PC-3 (cell line): ENCODE measurements at regions of chr2 and their contacts with region 1.

Region 1: GRCh38 chr2:156892467-156893281 is 364.8 kb upstream of the GALNT5 start:
- DNase-seq: peak; percentile 83
- ATAC-seq: peak; percentile 88
- H3K4me3 ChIP-seq: peak overlapping the region; percentile 76
- H3K27ac ChIP-seq: peak overlapping the region; percentile 28
- H3K4me1 ChIP-seq: peaks cover 15% of the 10 kb centered on the region
- H3K27me3 ChIP-seq: no peaks in the 10 kb centered on the region
- CTCF ChIP-seq: peak; percentile 76

Region 2: DNA sequence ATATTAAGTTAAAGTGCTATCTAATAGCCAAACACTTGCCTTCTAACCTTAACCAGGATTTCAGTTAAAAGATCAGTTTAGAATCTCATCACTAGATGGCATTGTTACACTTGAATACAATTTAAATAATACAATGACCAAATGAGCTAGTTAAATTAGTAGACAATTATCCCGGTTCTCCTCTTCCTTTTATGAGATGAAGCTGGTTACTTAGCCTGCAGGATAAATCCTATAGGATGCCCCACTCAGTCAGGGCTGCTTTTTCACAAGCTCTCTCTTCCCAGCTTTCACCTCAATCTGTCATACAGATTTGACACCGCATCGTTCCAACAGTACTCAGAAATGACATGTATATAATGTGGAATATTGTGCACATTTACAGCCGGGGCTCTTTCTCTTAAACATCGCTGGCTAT is 1515.4 kb before region 1 on chr2:
- CTCF ChIA-PET with region 1: no interaction called
- POLR2A ChIA-PET with region 1: no interaction called
- intact Hi-C with region 1: loop called (anchors 2 kb)
- DNase-seq: peak; percentile 63
- ATAC-seq: peak; percentile 38; the same call in 1 of the 2 replicates
- H3K4me3 ChIP-seq: no peak overlapping the region
- H3K27ac ChIP-seq: no peak overlapping the region
- H3K4me1 ChIP-seq: no peaks in the 10 kb centered on the region
- H3K27me3 ChIP-seq: no peaks in the 10 kb centered on the region
- CTCF ChIP-seq: peak; percentile 68

Region 3: DNA sequence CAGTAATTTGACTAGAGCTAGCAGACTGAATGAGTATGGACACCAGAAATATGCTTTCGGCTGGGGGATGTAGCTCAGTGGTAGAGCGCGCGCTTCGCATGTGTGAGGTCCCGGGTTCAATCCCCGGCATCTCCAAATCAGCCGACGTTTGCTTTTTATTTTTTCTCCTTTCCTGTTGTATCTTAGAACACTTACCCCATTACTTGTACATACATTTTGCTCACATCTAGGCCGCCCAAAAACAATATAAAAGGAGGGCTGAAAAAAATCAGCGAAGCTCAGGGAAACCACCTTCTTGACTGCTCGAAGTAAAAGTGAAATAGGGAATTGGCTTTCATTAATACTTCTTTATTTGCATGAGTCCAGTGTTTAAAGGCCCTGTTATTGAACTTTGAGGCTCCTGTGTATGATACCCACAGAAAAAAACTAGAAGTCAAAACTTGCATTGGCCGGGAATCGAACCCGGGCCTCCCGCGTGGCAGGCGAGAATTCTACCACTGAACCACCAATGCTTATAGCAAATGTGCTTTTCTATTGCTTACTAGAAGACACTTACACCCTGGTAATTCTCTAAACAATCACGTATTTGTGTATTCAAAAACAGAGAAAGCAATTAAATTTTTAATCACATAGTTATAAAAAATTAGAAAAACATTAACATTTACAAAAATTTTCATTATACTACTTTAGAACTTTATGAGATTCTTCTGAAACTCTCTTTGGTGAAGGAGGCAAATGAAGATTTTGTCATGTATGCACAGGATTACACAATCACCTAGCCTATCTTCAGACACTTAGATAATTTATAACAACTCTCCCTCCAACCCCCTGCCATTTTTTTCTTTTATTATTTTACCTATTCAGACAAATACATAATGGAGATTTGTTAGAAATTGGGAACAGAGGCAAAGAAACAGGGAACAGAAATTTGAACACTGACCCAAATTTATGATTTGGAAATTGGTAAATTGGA is 491.7 kb before region 1 on chr2:
- CTCF ChIA-PET with region 1: no interaction called
- POLR2A ChIA-PET with region 1: no interaction called
- intact Hi-C with region 1: loop called (anchors 2 kb)
- DNase-seq: peak; percentile 83
- ATAC-seq: peak; percentile 73
- H3K4me3 ChIP-seq: peak overlapping the region; percentile 74
- H3K27ac ChIP-seq: peak overlapping the region; percentile 91
- H3K4me1 ChIP-seq: peaks cover 21% of the 10 kb centered on the region
- H3K27me3 ChIP-seq: no peaks in the 10 kb centered on the region
- CTCF ChIP-seq: no peak

Region 4: DNA sequence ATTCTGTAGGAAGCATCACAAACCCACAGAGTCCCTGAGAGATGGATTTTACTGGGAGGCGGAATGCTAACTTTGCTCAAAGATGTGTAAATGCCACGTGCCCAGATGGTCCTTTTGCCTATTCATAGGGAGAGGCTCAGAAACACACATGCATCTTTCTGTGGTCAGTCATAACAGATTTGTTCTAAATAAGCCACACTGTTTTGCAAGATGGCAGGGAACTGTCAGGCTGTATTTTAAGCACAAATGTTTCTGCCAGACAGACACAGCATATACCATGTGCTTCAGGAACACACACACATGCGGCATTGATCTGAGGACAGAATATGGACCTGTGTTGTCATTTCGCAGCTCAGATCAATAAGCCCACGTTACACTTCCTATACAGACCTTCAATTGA is 144.5 kb before region 1 on chr2:
- CTCF ChIA-PET with region 1: no interaction called
- POLR2A ChIA-PET with region 1: no interaction called
- intact Hi-C with region 1: no loop called
- DNase-seq: no peak
- ATAC-seq: no peak
- H3K4me3 ChIP-seq: no peak overlapping the region
- H3K27ac ChIP-seq: no peak overlapping the region
- H3K4me1 ChIP-seq: no peaks in the 10 kb centered on the region
- H3K27me3 ChIP-seq: no peaks in the 10 kb centered on the region
- CTCF ChIP-seq: no peak

Region 5: DNA sequence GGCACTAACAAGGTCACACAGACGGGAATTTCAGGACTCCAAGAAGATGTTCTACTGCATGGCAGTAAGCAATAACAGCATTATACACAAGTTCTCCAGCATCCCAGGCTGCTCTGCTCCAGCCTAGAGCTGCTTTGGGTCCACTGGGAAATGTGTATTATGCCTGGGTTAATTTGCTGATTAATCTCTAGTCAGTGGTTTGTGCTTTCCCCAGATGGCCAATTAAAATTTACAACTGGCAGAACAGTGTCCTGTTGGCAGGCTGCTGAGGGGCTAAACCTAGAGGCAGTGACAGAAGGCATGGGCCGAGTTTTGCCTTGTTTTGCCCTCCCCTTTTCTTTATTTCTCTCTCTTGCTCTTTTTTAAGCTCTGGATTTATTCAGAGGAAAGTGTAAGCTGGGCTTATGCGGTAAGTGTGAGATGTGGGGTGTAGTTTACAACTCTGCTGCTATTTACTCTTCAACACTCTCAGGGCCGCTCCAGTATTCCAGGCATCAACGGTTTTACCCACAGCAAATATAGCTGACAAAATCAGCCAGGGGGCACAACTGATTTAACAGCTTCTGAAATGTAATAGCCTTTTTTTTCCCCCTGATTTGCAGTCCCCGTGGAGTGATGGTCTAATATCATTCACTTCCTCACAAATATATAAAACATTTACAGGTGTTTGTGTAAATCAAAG is 108.5 kb before region 1 on chr2:
- CTCF ChIA-PET with region 1: no interaction called
- POLR2A ChIA-PET with region 1: no interaction called
- intact Hi-C with region 1: loop called (anchors 5 kb)
- DNase-seq: no peak
- ATAC-seq: peak; percentile 49
- H3K4me3 ChIP-seq: no peak overlapping the region
- H3K27ac ChIP-seq: no peak overlapping the region
- H3K4me1 ChIP-seq: peaks cover 38% of the 10 kb centered on the region
- H3K27me3 ChIP-seq: no peaks in the 10 kb centered on the region
- CTCF ChIP-seq: no peak

Region 6: GRCh38 chr2:157032017-157032416 is 139.3 kb after region 1 on chr2:
- CTCF ChIA-PET with region 1: no interaction called
- POLR2A ChIA-PET with region 1: no interaction called
- intact Hi-C with region 1: loop called (anchors 5 kb)
- DNase-seq: peak; percentile 96
- ATAC-seq: peak; percentile 95
- H3K4me3 ChIP-seq: no peak overlapping the region
- H3K27ac ChIP-seq: peak overlapping the region; percentile 85
- H3K4me1 ChIP-seq: peaks cover 30% of the 10 kb centered on the region
- H3K27me3 ChIP-seq: no peaks in the 10 kb centered on the region
- CTCF ChIP-seq: no peak

Region 7: GRCh38 chr2:157194097-157194688 is 301.5 kb after region 1 on chr2:
- CTCF ChIA-PET with region 1: no interaction called
- POLR2A ChIA-PET with region 1: no interaction called
- intact Hi-C with region 1: loop called (anchors 2 kb)
- DNase-seq: peak; percentile 79
- ATAC-seq: peak; percentile 45
- H3K4me3 ChIP-seq: no peak overlapping the region
- H3K27ac ChIP-seq: no peak overlapping the region
- H3K4me1 ChIP-seq: no peaks in the 10 kb centered on the region
- H3K27me3 ChIP-seq: no peaks in the 10 kb centered on the region
- CTCF ChIP-seq: peak; percentile 89